ENCODE measurements at regions of chr16 and their contacts with region 1.

Region 1: GRCh38 chr16:15961060-15961511 is 11.7 kb downstream of the ABCC1 start:
- DNase-seq: peak; percentile 93
- H3K4me3 Mint-ChIP-seq: peak overlapping the region; percentile 81
- H3K27ac Mint-ChIP-seq: peak overlapping the region; percentile 99
- H3K4me1 Mint-ChIP-seq: peaks cover 81% of the 10 kb centered on the region
- H3K27me3 Mint-ChIP-seq: no peaks in the 10 kb centered on the region

Region 2: GRCh38 chr16:15888072-15888976 is 72.8 kb before region 1 on chr16 and contains the start of gene CEP20:
- CTCF ChIA-PET with region 1: no interaction called
- intact Hi-C with region 1: loop called (anchors 2 kb)
- DNase-seq: peak; percentile 100
- H3K4me3 Mint-ChIP-seq: peak within 1 kb of the TSS; percentile 100
- H3K27ac Mint-ChIP-seq: peak within 1 kb of the TSS; percentile 94
- H3K4me1 Mint-ChIP-seq: peaks cover 31% of the 10 kb centered on the region
- H3K27me3 Mint-ChIP-seq: no peaks in the 10 kb centered on the region
- total RNA-seq, gene CEP20: 49.0 to 57.0 TPM

Region 3: DNA sequence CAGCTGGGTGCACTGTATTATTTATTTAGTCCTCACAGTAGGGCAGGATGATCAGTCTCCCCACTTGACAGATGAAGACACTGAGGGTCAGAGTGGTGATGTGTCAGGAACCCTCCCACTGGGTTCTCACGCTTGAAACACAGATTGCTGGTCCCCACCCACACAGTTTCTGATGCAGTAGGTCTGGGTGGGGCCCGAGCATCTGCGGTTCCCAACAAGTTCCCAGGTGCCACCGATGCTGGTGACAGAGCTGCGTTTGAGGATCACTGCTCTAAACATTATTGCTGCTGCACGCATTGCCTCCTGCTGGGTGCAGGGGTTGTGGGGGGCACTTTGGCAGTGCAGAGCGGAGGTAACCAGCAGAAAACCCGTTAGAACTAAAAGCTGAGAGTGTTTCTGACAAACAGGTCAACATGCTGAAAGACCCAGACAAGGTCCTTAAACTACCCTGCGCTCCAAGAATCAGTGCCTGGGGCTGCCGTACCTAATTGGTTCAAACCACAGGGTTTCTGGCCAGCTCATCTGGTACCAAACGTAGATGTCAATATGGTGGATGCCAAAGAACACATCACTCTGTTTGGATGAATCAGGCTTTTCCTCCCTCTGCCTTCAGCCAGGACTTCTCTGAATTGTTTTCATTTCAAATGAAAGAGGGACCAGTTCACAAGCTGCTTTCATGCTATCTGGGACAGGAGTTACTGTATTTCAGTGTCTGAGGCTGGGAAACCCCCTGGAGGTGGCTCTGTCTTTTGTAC is 64.3 kb after region 1 on chr16:
- CTCF ChIA-PET with region 1: no interaction called
- intact Hi-C with region 1: loop called (anchors 5 kb)
- DNase-seq: peak; percentile 69
- H3K4me3 Mint-ChIP-seq: no peak overlapping the region
- H3K27ac Mint-ChIP-seq: peak overlapping the region; percentile 79
- H3K4me1 Mint-ChIP-seq: peaks cover 30% of the 10 kb centered on the region
- H3K27me3 Mint-ChIP-seq: no peaks in the 10 kb centered on the region